Cardiac septum (tissue), 1 donor: ENCODE measurements at regions of chr20 and their contacts with region 1.

Region 1: DNA sequence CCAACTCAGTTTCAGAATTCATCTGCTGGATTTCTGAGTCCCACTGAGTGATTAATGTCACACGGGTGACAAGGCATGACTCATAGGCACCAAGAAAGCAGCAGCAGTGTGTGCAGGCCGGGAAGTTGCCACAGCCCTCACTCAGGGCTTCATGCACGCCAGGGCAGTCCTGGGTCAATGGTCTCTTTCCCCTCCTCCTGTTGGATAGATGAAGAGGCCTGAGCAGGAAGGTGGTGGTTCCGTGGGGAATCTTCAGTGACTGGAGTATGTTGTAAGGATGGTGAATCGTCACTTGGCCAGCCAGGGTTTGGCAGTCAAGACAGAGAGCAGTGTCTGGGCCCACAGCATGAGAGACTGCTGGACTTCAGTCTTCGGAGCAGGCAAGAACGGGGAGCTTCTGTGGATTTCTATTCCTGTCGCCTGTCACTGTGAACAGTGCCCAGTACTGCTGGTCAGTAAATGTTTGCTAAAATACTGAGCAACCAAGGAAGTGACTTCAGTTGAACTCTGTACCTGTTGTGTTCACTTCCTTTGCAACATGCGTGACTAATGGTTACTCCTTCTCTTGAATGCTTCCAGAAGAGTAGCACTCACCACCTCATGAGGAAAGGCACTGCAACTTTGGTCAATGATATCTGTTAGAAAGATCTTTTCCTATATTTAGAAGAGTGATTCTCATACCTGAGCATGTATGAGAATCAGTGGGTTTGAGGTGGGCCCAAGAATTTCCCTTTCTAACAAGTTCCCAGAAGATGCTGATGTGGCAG is 62.0 kb upstream of the CD93 start:
- DNase-seq: peak; percentile 89

Region 2: DNA sequence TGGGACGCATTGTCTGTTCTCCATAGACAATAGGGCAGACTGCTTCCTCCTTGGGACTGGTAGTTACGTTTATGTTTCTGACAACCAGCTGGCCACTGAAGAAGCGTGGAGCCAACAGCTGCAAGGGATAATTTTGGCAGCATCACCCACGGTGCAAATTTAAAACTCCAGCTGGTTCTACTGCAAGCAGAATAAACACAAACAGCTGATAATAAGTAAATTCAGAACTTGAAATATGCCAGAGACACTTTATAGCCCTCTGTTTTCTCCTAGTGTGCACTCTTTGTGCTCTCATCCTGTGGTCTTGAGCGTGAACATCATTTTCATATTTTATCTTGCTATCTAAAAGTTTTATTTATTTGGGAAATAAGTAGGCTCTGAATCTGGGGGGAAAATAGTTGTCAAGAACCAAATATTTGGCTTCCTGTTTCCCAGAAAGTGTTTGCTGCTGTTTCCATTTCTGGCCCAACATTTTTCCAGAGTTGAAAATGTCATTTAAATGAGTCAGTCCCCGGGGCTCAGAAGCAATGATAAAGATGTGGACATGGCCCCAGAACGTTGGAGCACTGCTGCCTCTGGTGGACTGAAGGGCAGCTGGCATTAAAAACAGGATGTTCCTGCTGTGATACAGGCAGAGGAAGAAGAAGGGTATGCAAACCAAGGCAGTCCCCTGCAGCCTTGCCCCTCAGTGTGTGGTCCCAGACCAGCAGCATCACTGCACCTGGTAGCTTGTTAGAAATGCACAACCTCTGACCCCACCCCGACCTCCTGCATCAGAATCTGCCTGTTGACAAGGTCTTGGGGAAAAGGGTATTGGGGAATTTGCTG is 86.2 kb before region 1 on chr20:
- intact Hi-C with region 1: loop called (anchors 5 kb)
- DNase-seq: no peak

Region 3: DNA sequence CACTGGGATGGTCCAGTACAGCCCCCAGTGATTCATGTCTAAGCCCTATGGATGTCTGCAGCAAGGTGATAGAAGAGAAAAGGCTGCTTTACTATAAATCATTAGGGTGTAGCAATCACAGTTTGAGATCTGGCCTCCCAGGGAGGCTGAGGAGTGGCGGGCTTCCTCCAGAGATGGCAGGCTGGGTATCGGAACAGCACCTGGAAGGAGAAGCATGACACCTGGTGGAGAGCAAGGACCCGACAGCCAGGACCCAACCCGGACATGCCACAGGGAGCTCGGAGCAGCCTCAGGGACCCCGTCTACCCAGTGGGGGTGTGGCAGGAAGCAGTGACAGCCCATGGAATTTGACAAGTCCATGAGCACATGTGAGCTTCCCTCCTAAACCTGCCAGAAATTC is 52.8 kb after region 1 on chr20:
- intact Hi-C with region 1: loop called (anchors 5 kb)
- DNase-seq: no peak

Region 4: DNA sequence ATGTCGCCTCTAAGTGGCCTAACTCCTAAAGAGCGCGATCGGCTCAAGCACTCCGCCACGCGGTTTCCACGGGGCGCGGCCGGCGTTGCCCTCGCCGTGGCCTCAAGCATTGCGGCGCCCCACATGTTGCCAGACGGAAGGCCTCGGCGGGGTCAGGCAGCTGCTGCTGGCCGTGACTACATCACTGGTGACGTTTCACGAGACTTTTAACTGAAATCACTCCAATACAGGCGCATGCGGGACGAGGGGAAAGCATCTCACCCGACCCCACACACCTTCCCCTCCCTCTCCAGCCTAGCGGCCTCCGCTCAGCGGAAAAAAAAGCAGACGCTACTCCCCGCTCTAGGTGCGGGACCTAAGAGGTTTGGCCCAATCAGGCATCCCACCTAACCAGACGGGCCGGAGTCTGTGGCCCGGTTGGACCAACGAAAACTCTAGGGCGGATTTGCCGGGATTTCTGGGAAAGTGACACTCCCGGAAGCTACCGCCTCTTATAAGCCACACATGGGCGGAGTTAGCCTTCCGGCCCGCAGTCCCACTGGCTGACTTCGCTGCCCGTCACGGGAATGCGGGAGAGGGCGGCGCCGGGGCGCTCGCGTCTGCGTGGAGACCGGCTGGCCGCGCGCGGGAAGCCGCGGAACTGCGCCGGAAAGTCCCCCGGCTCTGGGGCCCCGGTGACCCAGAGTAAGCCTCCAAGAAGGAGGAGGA is 202.2 kb after region 1 on chr20 and contains the start of gene NXT1:
- intact Hi-C with region 1: loop called (anchors 10 kb)
- DNase-seq: peak; percentile 99
- total RNA-seq, gene NXT1: 10.6 TPM